OCI-LY7 (cell line): ENCODE measurements at regions of chr13 and their contacts with region 1.

Region 1: DNA sequence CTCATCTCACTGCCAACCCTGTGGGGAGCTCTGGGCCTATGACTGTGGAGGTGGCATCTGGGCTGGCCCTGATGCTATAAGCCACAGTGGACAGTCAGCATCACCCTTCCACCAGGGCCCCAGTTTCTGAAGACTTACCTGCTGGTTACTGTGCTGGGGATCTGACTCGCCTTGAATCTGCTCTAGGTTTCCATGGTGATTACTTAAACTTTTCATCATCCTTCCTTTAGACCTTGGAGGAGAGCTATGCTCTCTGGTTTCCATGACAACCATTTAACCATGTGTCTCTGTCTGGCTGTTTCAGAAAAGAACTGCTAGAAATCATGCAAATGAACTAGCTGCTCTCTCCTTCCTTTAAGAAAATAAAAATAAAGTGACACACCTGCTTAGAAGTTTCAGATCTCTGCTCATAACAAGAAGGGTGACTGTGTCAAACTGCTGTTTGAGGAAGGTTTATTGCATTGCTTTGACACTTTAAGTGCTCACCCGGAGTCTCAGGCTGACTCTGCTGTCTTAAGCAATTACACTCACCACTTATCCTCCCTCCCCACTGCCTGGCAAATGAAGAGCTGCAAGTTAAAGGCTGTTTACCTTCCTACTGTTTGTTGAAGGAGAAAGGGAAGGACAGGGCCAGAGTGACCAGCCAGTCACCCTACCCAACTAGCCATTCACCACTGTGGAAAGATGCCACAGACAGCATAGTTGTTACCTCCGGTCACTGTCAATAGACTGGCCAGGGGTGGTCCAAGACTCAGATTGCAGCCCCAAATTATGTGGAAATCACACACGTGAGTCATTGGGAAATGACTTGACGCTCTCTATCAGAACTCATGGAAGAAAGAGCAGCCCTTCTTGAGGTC is 87.6 kb downstream of the HSPH1 start:
- DNase-seq: peak; percentile 96
- H3K4me3 ChIP-seq: peak overlapping the region; percentile 50
- H3K27ac ChIP-seq: peak overlapping the region; percentile 96
- H3K4me1 ChIP-seq: peaks cover 44% of the 10 kb centered on the region
- CTCF ChIP-seq: no peak

Region 2: DNA sequence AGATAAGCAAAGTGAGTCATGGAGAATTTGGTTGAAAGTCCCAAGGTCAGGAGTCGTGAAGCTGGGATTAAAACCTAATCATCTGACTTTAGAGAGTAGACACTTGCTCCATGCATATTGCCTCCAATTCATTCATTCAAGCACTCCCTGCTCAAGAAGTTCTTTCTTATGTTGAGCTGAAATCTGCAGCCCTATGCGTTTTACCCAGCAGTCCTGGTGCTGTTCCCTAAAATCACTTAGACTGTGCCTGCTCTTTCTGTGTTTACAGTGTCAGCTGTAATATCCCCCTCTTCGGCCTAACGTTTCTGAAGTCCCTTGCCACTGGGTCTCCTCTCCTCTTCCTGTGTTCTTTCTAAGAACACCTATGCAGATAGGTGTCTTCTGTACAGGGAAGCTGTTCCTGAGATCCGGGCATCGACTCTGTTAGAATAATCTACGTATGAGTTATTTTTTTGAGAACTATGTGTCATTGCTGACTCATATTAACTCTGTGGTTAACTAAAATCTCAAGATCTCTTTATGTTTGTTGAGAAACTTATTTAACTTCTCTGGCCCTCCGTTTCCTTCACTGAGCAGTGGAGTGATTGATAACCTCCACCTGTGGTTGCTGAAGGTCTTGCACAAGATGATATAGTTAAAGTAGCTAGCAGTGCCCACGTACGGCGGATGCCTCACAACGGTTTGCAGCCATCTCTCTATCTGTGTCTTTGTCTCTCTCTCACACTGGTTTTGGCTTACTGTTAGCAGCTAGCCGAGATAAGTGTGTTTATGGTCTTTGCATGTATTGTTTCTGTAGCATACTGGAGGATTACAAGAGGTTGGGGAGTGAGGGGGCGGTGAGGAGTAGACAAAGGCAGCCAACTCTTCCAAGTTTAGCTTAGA is 334.1 kb before region 1 on chr13:
- CTCF ChIA-PET with region 1: no interaction called
- POLR2A ChIA-PET with region 1: no interaction called
- intact Hi-C with region 1: loop called (anchors 1 kb)
- DNase-seq: peak; percentile 5
- H3K4me3 ChIP-seq: no peak overlapping the region
- H3K27ac ChIP-seq: no peak overlapping the region
- H3K4me1 ChIP-seq: peaks cover 57% of the 10 kb centered on the region
- CTCF ChIP-seq: no peak

Region 3: DNA sequence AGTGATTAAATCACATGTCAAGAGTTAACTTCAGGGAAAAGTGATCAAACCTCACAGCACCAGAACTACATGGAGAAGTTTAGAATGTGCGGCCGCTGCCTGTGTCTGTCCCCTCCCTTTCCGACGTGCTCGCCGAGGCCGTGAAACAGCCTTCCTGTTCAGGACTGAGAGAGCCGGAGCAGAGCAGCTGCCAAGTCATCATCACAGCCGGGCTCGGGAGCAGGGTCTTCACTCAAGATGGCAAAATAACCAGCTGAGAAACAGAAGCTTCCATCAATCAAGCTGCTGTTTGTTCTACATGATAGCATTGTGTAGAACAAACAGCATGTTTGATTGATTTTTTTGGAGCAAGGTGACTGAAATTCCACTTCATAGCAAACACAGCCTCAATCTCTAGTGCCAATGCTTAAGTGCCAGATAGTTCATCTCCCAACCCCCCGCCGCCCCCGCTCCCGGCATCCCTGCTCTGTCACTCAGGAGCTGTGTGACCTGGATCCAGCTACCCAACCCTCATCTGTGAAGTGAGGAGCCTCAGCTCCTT is 17.0 kb after region 1 on chr13:
- CTCF ChIA-PET with region 1: no interaction called
- POLR2A ChIA-PET with region 1: interaction called, 11 read pairs
- intact Hi-C with region 1: no loop called
- DNase-seq: peak; percentile 5
- H3K4me3 ChIP-seq: no peak overlapping the region
- H3K27ac ChIP-seq: no peak overlapping the region
- H3K4me1 ChIP-seq: no peaks in the 10 kb centered on the region
- CTCF ChIP-seq: no peak